Transverse colon (tissue), 4 donors: ENCODE measurements at regions of chr10 and their contacts with region 1.

Region 1: DNA sequence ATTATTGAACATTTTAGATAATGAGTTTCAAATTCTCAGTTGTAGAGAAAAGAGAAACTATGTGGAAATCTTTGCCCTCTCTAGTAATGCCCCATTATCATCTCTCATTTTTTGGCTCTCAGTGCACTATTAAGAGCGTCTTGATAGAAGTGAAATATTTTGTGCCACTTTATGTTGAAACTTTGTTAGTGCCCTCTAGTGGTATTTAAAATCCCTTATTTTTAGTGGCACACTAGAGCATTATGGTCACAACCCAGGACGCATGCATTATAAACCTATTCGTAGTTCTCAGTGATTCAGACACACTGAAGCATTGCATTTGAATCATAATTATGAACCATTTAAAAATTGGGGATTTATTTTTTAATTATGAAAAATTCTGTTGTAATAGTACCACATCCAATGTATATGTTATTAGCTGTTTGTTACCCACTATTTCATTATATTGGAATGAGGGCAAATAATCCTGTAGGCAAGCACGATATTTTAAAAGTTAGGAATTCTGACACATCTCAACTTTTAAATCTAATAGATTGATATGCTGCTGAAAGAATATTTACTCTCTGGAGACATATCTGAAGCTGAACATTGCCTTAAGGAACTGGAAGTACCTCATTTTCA is 21.9 kb downstream of the PDCD4 start:
- DNase-seq: no peak
- H3K4me3 ChIP-seq: no peak overlapping the region
- H3K27ac ChIP-seq: peak overlapping the region in 1 of 4 donors; percentile 21
- H3K4me1 ChIP-seq: peaks cover 4 to 55% (median 14%) of the 10 kb centered on the region in 4 donors
- H3K27me3 ChIP-seq: no peaks in the 10 kb centered on the region
- CTCF ChIP-seq: peak; percentile 51 to 64 (median 63)
- EP300 ChIP-seq: no peak
- POLR2A ChIP-seq: no peak

Region 2: GRCh38 chr10:110304780-110305421 is 588.8 kb before region 1 on chr10 and contains the start of gene SMNDC1:
- in situ Hi-C with region 1: loop called in 1 of 4 experiments (anchors 25 kb)
- intact Hi-C with region 1: no loop called
- DNase-seq: peak; percentile 99
- H3K4me3 ChIP-seq: peak within 1 kb of the TSS; percentile 78 to 99 (median 95)
- H3K27ac ChIP-seq: peak within 1 kb of the TSS; percentile 92 to 98 (median 96)
- H3K4me1 ChIP-seq: peaks cover 8 to 54% (median 23%) of the 10 kb centered on the region in 4 donors
- H3K27me3 ChIP-seq: peaks cover 3% of the 10 kb centered on the region
- CTCF ChIP-seq: no peak
- EP300 ChIP-seq: no peak
- POLR2A ChIP-seq: peak; percentile 81
- total RNA-seq, gene SMNDC1: 3.6 to 15.7 (median 8.9) TPM

Region 3: GRCh38 chr10:110610308-110610774 is 283.3 kb before region 1 on chr10:
- in situ Hi-C with region 1: loop called in 1 of 4 experiments (anchors 25 kb)
- intact Hi-C with region 1: no loop called
- DNase-seq: peak; percentile 45
- H3K4me3 ChIP-seq: no peak overlapping the region
- H3K27ac ChIP-seq: no peak overlapping the region
- H3K4me1 ChIP-seq: no peaks in the 10 kb centered on the region
- H3K27me3 ChIP-seq: no peaks in the 10 kb centered on the region
- CTCF ChIP-seq: peak; percentile 69 to 83 (median 78)
- EP300 ChIP-seq: no peak
- POLR2A ChIP-seq: no peak

Region 4: DNA sequence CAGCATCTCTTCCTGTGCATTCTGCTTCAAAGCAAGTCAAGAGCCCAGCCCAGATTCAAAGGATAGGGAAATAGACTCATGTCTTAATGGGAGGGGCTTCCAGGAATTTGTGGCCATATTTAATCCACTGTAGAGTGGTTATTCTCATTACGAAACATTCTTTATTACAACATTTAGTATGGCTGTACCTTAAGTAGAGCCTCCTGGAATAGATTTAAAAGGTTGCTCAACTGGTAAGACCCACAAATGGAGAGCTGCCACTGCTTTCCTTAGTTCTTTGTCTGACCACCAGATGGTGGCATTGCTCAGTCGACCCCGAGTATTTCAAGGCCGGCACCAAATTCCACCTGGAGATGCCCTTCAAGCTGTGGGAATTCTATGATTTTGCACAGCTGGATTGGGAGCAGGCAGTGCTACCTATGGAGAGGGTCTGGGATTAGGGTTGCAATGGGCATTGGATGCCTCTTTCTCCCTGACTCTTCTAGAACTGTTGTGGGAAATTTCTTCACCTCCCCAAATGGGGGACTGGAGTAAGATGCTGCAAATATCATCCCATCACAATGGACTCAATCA is 147.3 kb before region 1 on chr10:
- in situ Hi-C with region 1: loop called in 2 of 4 experiments (anchors 5 to 10 kb)
- intact Hi-C with region 1: loop called (anchors 5 kb)
- DNase-seq: peak; percentile 74
- H3K4me3 ChIP-seq: no peak overlapping the region
- H3K27ac ChIP-seq: no peak overlapping the region
- H3K4me1 ChIP-seq: peaks cover 0 to 18% (median 1%) of the 10 kb centered on the region in 4 donors
- H3K27me3 ChIP-seq: no peaks in the 10 kb centered on the region
- CTCF ChIP-seq: peak; percentile 77 to 87 (median 82)
- EP300 ChIP-seq: no peak
- POLR2A ChIP-seq: no peak

Region 5: DNA sequence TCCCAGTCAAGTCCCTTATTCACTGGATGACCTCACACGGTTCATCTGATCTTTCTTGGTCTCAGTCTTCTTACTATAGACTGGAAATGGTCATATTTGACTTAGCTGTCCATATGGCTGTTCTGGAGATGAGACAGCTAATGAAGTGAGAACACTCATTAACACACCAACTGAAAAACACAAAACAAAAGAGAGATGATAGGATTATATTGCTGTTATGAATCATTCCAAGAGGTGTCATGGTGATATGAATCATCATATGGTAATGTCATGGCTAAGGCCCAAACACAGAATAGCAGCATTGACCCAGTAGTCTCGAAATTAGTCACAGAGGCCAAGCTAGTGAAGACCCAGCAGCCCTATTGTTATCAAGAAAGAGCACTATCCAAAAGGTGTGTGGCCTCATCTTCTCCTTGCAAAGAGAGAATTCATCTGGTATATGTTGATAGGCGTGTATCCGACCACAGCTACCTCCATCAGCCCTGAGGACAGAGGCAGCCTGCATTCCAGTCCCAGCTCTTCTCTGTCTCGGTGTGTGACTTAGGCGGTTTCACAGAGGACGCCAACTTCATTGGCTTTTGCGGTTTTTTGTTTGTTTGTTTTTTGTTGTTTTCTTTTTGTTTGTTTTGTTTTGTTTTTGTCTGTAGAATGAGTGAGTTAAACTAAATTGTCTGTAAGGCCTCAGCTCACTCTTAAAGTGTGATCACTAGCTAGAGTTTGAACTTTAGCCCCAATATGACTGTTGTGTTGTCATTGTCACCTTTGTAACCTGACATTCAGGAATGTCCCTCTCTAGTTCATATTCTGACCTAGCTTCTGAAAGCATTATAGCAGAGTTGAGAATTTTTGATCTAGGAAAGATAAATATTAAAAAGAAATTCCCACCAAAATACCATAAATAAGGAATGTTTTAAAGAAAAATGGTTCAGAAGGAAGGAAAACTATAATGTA is 119.3 kb before region 1 on chr10:
- in situ Hi-C with region 1: loop called in 1 of 4 experiments (anchors 25 kb)
- intact Hi-C with region 1: no loop called
- DNase-seq: no peak
- H3K4me3 ChIP-seq: no peak overlapping the region
- H3K27ac ChIP-seq: peak overlapping the region; percentile 81 to 87 (median 85)
- H3K4me1 ChIP-seq: peaks cover 16 to 48% (median 23%) of the 10 kb centered on the region in 4 donors
- H3K27me3 ChIP-seq: no peaks in the 10 kb centered on the region
- CTCF ChIP-seq: no peak
- EP300 ChIP-seq: peak; percentile 68
- POLR2A ChIP-seq: no peak

Region 6: DNA sequence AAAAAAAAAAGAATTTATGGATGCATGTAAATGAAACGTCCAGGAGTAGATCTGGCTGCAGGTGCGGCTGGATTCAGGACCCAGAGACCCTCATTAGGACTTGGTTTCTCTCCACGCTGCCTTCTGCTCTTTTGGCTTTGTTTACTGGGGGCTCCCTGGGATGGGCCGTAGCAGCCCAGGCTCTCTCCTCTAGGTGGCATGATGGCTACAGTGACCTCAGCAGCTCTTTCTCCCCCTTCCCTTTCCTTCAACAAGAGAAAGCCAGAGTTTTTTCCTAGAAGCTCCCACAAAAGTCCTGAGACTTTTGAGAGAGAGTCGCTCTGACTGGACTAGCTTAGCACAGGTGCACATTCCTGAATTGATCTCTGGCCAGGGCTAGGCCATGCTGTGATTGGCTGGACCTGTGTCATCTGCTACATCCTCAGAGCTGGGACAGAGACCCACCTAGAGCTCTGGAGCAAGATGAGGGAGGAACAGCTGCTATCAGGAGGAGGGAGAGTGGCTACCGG is 89.8 kb before region 1 on chr10:
- in situ Hi-C with region 1: loop called in 3 of 4 experiments (anchors 10 to 25 kb)
- intact Hi-C with region 1: no loop called
- DNase-seq: peak; percentile 74
- H3K4me3 ChIP-seq: no peak overlapping the region
- H3K27ac ChIP-seq: peak overlapping the region; percentile 63 to 75 (median 65)
- H3K4me1 ChIP-seq: peaks cover 18 to 51% (median 30%) of the 10 kb centered on the region in 4 donors
- H3K27me3 ChIP-seq: no peaks in the 10 kb centered on the region
- CTCF ChIP-seq: peak; percentile 59 to 82 (median 64)
- EP300 ChIP-seq: no peak
- POLR2A ChIP-seq: no peak

Region 7: DNA sequence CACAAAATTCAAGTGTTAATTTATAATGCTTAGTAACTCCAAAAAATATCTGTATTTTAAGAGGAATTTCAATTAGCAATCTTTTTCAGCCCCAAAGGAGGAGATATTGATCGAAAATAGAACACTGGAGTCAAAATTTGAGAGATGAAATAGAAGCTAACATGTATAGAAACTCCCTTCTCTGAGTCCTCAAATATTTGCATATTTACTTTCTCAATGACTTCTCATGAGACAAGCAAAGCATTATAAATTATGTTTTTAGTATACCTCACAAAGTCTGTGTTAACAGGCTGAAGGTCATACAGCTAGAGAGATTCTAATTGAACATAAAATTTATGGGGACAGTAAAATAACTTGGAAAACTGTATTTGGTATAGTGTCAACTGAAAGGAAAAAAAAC is 1029.4 kb after region 1 on chr10:
- in situ Hi-C with region 1: no loop called
- intact Hi-C with region 1: no loop called
- DNase-seq: no peak
- H3K4me3 ChIP-seq: no peak overlapping the region
- H3K27ac ChIP-seq: no peak overlapping the region
- H3K4me1 ChIP-seq: no peaks in the 10 kb centered on the region
- H3K27me3 ChIP-seq: no peaks in the 10 kb centered on the region
- CTCF ChIP-seq: no peak
- EP300 ChIP-seq: no peak
- POLR2A ChIP-seq: no peak